Panc1 (cell line): ENCODE measurements at regions of chr1 and their contacts with region 1.

Region 1: DNA sequence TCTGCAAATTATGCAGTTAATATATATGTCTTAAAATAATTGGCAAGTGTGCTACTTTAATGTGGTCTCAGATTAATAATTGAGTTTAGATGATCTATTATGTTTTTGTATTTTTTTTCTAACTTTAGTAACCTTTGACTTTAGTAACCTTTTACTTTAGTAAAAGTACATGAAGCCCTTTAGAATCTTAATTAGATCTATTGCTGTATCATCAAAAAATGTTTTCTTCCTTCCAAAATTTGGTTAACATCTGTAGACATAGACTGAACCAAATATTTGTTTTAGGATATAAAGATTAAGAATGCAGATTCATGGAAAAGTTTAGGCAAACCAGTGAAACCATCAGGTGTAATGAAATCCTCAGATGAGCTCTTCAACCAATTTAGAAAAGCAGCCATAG is 25.7 kb upstream of the EPHX4 start:
- DNase-seq: no peak
- ATAC-seq: no peak
- H3K4me3 ChIP-seq: no peak overlapping the region
- H3K27ac ChIP-seq: no peak overlapping the region
- H3K4me1 ChIP-seq: no peaks in the 10 kb centered on the region
- H3K27me3 ChIP-seq: no peaks in the 10 kb centered on the region
- CTCF ChIP-seq: no peak

Region 2: DNA sequence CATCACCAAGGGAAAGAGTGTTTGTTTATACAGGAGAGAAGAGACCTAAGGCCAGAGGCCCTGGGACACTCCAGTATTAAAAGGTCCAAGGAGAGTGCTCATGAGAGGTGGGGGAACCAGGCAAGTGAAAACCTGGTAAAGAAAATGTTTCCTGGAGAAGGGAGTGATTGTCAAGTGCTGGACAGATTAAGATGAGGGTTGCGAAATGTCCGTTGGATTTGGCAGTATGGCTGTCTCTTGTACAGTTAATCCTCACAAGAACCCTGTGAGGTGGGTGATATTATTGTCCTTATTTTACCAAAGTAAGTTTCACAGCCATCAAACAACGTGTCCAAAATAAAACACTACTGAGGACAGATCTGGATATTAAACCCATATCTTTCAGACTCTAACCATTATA is 338.9 kb after region 1 on chr1:
- CTCF ChIA-PET with region 1: no interaction called
- POLR2A ChIA-PET with region 1: interaction called, 13 read pairs
- in situ Hi-C with region 1: no loop called
- intact Hi-C with region 1: no loop called
- DNase-seq: no peak
- ATAC-seq: no peak
- H3K4me3 ChIP-seq: no peak overlapping the region
- H3K27ac ChIP-seq: no peak overlapping the region
- H3K4me1 ChIP-seq: no peaks in the 10 kb centered on the region
- H3K27me3 ChIP-seq: no peaks in the 10 kb centered on the region
- CTCF ChIP-seq: no peak